Calu3 (cell line): ENCODE measurements at regions of chr3 and their contacts with region 1.

Region 1: DNA sequence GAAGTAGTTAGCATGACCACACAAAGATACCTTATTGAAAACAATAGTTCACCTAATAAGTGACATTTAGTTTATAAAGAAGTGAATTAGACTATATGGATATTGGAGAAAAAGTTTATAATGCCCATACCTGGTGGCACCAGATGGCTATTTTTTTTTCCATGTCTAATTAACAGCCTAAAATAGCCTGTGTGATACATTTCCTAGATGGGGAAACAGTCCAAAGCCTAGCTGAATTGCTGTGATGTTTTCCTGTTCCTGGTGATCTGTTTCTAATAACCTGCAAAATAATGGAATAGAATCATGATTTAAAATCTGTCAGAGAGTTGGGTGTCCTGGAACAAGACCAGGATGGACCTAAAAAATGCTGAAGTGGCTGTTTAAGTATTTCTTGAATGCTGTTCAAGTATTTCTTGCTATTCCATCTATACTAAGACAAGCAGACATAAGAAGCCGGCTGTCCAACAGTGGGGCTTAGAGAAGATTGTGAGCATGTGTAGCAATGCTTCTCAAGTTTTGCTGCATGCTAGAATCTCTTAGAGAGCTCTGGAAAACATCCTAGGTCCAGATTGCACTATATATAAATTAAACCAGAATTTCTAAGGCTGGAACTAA is 31.3 kb downstream of the LRRC3B start:
- DNase-seq: no peak
- H3K4me3 Mint-ChIP-seq: no peak overlapping the region
- H3K27ac Mint-ChIP-seq: peak overlapping the region; percentile 85
- H3K4me1 Mint-ChIP-seq: peaks cover 37% of the 10 kb centered on the region
- H3K27me3 Mint-ChIP-seq: no peaks in the 10 kb centered on the region
- CTCF ChIP-seq: no peak

Region 2: GRCh38 chr3:26590919-26591484 is 62.9 kb before region 1 on chr3:
- CTCF ChIA-PET with region 1: no interaction called
- intact Hi-C with region 1: loop called (anchors 2 kb)
- DNase-seq: peak; percentile 20
- H3K4me3 Mint-ChIP-seq: no peak overlapping the region
- H3K27ac Mint-ChIP-seq: peak overlapping the region; percentile 53
- H3K4me1 Mint-ChIP-seq: peaks cover 13% of the 10 kb centered on the region
- H3K27me3 Mint-ChIP-seq: peaks cover 71% of the 10 kb centered on the region
- CTCF ChIP-seq: no peak

Region 3: GRCh38 chr3:26920634-26921033 is 266.7 kb after region 1 on chr3:
- CTCF ChIA-PET with region 1: no interaction called
- intact Hi-C with region 1: no loop called
- DNase-seq: no peak
- H3K4me3 Mint-ChIP-seq: no peak overlapping the region
- H3K27ac Mint-ChIP-seq: no peak overlapping the region
- H3K4me1 Mint-ChIP-seq: no peaks in the 10 kb centered on the region
- H3K27me3 Mint-ChIP-seq: no peaks in the 10 kb centered on the region
- CTCF ChIP-seq: no peak